Ovary (tissue), 10 donors: ENCODE measurements at regions of chr16 and their contacts with region 1.

Region 1: GRCh38 chr16:51151961-51152663 is 1.0 kb upstream of the SALL1 start:
- DNase-seq: peak; percentile 75 to 92 (median 82)
- H3K4me3 ChIP-seq: peak overlapping the region; percentile 62
- H3K27ac ChIP-seq: peak overlapping the region; percentile 60 to 80
- H3K4me1 ChIP-seq: peaks cover 2% of the 10 kb centered on the region
- H3K27me3 ChIP-seq: no peaks in the 10 kb centered on the region
- CTCF ChIP-seq: no peak
- EP300 ChIP-seq: no peak
- POLR2A ChIP-seq: no peak

Region 2: GRCh38 chr16:50841081-50841886 is 310.8 kb before region 1 on chr16:
- intact Hi-C with region 1: no loop called
- DNase-seq: peak in 1 of 5 donors; percentile 39
- H3K4me3 ChIP-seq: no peak overlapping the region
- H3K27ac ChIP-seq: no peak overlapping the region
- H3K4me1 ChIP-seq: no peaks in the 10 kb centered on the region
- H3K27me3 ChIP-seq: no peaks in the 10 kb centered on the region
- CTCF ChIP-seq: no peak
- EP300 ChIP-seq: no peak
- POLR2A ChIP-seq: no peak

Region 3: GRCh38 chr16:51243936-51244436 is 91.9 kb after region 1 on chr16:
- intact Hi-C with region 1: loop called in 1 of 4 experiments (anchors 10 kb)
- DNase-seq: peak in 2 of 5 donors; percentile 52 to 54
- H3K4me3 ChIP-seq: no peak overlapping the region
- H3K27ac ChIP-seq: no peak overlapping the region
- H3K4me1 ChIP-seq: peaks cover 13% of the 10 kb centered on the region
- H3K27me3 ChIP-seq: no peaks in the 10 kb centered on the region
- CTCF ChIP-seq: no peak
- EP300 ChIP-seq: no peak
- POLR2A ChIP-seq: no peak

Region 4: GRCh38 chr16:51450909-51451308 is 298.8 kb after region 1 on chr16:
- intact Hi-C with region 1: no loop called
- DNase-seq: no peak
- H3K4me3 ChIP-seq: no peak overlapping the region
- H3K27ac ChIP-seq: no peak overlapping the region
- H3K4me1 ChIP-seq: no peaks in the 10 kb centered on the region
- H3K27me3 ChIP-seq: no peaks in the 10 kb centered on the region
- CTCF ChIP-seq: no peak
- EP300 ChIP-seq: no peak
- POLR2A ChIP-seq: no peak